Ascending aorta (tissue), 2 donors: ENCODE measurements at regions of chr7 and their contacts with region 1.

Region 1: GRCh38 chr7:22854158-22855048 is 31.8 kb upstream of the TOMM7 start:
- DNase-seq: peak; percentile 80 to 95
- H3K4me3 ChIP-seq: peak overlapping the region; percentile 75 to 83
- H3K27ac ChIP-seq: peak overlapping the region; percentile 94 to 98
- H3K4me1 ChIP-seq: peaks cover 9 to 37% of the 10 kb centered on the region in 2 donors
- H3K27me3 ChIP-seq: no peaks in the 10 kb centered on the region
- CTCF ChIP-seq: peak in 1 of 3 experiments; percentile 61

Region 2: GRCh38 chr7:22219036-22219435 is 635.4 kb before region 1 on chr7:
- intact Hi-C with region 1: loop called (anchors 10 kb)
- DNase-seq: no peak
- H3K4me3 ChIP-seq: peak overlapping the region; percentile 48 to 58
- H3K27ac ChIP-seq: peak overlapping the region; percentile 74 to 86
- H3K4me1 ChIP-seq: peaks cover 16 to 28% of the 10 kb centered on the region in 2 donors
- H3K27me3 ChIP-seq: no peaks in the 10 kb centered on the region
- CTCF ChIP-seq: no peak

Region 3: DNA sequence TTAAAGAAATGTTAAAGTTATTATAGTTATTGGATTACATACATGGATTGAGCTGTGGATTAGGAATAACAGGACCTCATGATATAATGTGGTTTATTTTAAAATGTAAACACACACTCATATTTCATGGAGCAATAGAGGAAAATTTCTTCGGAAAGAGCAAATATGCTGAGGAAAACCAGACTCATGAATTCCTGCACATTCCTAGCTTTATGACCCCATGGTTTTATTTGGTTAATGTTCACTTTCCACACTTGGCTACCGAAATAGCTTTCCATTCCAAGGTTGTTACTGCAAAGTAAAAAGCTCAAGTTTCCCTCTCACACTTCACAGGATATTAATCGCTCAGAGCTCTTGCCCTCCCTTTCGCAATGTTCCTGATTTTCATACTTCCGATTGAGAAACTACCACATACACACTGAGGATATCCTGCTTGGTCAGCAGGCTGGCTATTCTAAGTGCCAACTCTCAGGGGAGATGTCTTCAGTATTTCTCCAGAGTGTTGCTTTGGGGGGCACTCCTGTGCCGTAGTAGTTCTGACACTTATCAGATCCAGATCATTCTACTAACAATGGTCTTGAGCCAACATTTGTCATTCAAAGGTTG is 276.9 kb before region 1 on chr7:
- intact Hi-C with region 1: loop called (anchors 5 kb)
- DNase-seq: peak; percentile 21 to 87
- H3K4me3 ChIP-seq: no peak overlapping the region
- H3K27ac ChIP-seq: peak overlapping the region; percentile 79 to 89
- H3K4me1 ChIP-seq: peaks cover 7 to 31% of the 10 kb centered on the region in 2 donors
- H3K27me3 ChIP-seq: no peaks in the 10 kb centered on the region
- CTCF ChIP-seq: no peak

Region 4: GRCh38 chr7:22822486-22823141 is 31.8 kb before region 1 on chr7 and contains the start of gene TOMM7:
- intact Hi-C with region 1: loop called (anchors 2 kb)
- DNase-seq: peak; percentile 40 to 91
- H3K4me3 ChIP-seq: peak within 1 kb of the TSS; percentile 74 to 86
- H3K27ac ChIP-seq: peak within 1 kb of the TSS; percentile 67 to 80
- H3K4me1 ChIP-seq: peaks cover 3 to 9% of the 10 kb centered on the region in 2 donors
- H3K27me3 ChIP-seq: no peaks in the 10 kb centered on the region
- CTCF ChIP-seq: peak; percentile 24 to 55 (median 54)
- total RNA-seq, gene TOMM7: 65.1 TPM

Region 5: DNA sequence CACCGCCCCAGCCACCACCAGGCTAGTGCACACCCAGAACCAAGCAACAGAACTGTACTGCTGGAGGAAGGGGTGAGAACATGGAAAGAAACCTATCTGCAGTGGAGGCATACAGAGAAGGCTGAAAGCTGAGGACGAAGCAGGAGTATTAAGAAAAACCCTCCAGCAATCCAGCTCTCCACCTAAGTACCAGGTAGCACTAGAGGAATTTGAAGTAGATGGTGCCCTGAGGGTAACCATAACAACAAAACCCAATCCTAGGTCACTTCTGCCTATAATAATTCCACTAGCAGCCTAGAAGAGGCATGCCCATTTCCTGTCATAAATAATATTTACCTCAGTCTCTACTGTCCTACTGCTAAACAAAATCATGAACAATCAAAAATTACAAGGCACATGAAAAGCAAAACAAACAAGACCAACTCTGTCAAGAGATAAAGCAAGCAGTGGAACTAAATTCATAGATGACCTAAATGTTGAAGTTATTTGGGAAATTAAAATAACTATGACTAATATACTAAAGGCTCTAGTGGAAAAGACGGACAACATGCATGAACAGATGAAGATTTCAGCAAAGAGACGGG is 108.5 kb after region 1 on chr7:
- intact Hi-C with region 1: loop called (anchors 5 kb)
- DNase-seq: no peak
- H3K4me3 ChIP-seq: no peak overlapping the region
- H3K27ac ChIP-seq: peak overlapping the region in 1 of 2 donors; percentile 28
- H3K4me1 ChIP-seq: peaks cover 0 to 5% of the 10 kb centered on the region in 2 donors
- H3K27me3 ChIP-seq: no peaks in the 10 kb centered on the region
- CTCF ChIP-seq: no peak

Region 6: GRCh38 chr7:23055582-23056178 is 201.3 kb after region 1 on chr7:
- intact Hi-C with region 1: loop called (anchors 2 kb)
- DNase-seq: peak in 1 of 2 donors; percentile 68
- H3K4me3 ChIP-seq: no peak overlapping the region
- H3K27ac ChIP-seq: no peak overlapping the region
- H3K4me1 ChIP-seq: no peaks in the 10 kb centered on the region
- H3K27me3 ChIP-seq: no peaks in the 10 kb centered on the region
- CTCF ChIP-seq: peak; percentile 74 to 96 (median 88)

Region 7: DNA sequence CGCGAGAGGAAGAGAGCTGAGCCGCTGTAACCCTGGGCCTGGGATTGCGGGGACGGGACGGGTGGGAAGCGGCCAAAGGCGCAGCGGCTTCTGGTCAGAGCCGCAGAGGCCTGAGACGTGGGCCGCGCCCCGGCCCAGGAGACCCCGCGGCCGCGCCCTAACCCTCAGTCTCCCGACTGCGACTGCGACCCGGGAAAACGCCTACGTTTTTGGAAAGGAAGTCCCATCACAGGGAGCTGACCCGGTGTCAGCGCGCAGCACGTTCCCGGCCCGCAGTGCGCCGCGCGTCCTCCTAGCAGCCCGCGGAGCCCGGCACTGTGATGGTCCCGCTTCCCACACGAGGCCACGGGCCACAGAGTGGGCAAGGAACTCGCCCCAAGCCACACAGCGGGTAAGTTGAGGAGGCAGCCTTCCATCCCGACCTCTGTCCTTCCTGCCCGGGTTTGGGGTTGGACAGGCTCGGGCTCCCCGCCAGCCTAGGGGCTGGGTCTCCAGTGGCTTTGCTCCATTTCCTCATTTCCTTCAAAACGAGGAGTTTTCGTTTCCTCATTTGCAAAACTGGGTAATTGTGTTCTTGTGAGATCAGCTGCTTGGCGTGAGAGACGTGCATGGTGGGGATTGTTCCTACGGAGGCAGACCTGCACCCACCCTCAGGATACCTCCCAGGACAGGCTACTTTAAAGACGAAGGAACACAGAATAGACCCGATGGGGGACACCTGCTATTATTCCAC is 393.4 kb after region 1 on chr7:
- intact Hi-C with region 1: loop called (anchors 10 kb)
- DNase-seq: peak in 1 of 2 donors; percentile 66
- H3K4me3 ChIP-seq: peak overlapping the region; percentile 47 to 73
- H3K27ac ChIP-seq: peak overlapping the region; percentile 90 to 91
- H3K4me1 ChIP-seq: peaks cover 0 to 18% of the 10 kb centered on the region in 2 donors
- H3K27me3 ChIP-seq: no peaks in the 10 kb centered on the region
- CTCF ChIP-seq: no peak